ENCODE measurements at regions of chr10 and their contacts with region 1.

Region 1: DNA sequence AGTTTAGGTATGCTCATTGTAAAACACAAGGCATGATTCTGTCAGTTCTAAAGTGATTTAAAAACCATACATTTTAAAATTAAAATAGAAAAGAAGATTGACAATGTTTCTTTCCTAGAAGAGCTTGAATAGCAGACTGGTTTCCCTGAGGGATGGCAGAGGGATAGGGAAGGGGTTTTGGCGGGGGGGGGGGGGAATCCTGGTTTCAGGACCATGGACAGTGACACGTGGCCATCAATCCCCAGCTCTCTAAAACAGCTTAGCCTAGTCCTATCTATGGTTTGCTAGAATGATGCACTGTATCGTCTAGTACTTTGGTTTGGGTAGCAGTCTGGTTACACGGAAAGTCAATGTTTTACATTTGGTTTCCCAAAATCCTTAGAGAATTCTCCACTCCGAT is 88.7 kb downstream of the PHYHIPL start:
- DNase-seq: no peak
- ATAC-seq: no peak
- H3K4me3 Mint-ChIP-seq: no peak overlapping the region
- H3K27ac Mint-ChIP-seq: no peak overlapping the region
- H3K4me1 Mint-ChIP-seq: no peaks in the 10 kb centered on the region
- H3K27me3 Mint-ChIP-seq: no peaks in the 10 kb centered on the region
- CTCF ChIP-seq: no peak

Region 2: DNA sequence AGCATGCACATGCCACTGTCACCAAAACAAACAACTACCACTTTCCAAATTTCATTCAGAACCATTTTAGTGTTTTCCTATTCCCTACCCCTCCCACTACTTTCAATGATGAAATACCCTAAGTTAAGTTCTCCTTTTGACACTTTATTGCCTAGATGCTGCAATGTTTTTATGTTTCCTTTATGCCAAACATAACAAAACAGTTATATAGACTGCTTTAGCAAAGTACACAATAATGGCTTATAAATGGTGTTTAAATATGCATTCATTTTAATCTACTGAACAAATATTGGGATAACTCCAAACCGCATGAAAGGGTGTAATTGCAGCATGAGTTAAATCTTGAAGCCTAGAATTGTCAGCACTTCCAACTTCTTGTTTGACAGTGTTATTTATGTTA is 19.5 kb before region 1 on chr10:
- CTCF ChIA-PET with region 1: no interaction called
- POLR2A ChIA-PET with region 1: no interaction called
- intact Hi-C with region 1: no loop called
- DNase-seq: no peak
- ATAC-seq: no peak
- H3K4me3 Mint-ChIP-seq: no peak overlapping the region
- H3K27ac Mint-ChIP-seq: no peak overlapping the region
- H3K4me1 Mint-ChIP-seq: no peaks in the 10 kb centered on the region
- H3K27me3 Mint-ChIP-seq: peaks cover 2% of the 10 kb centered on the region
- CTCF ChIP-seq: no peak

Region 3: DNA sequence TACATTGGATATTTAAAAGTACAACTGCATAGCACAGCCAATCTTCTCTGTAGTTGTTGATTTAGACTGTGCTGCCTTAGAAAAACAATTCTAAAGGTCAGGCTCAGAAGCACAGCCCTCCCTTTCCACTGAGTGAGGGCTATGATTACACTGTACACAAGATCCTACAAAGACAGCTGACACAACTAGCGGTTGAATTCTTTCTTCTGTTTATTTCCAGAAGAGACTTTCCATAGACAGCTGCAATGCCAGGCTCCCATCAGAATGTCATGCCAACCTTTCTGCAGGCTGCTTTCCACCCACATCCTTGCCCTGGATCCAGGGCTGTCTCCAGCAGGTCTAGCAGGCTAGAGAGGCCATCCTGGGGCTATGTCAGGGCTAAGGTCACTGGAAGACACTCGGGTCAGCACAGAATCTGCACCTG is 57.9 kb after region 1 on chr10:
- CTCF ChIA-PET with region 1: no interaction called
- POLR2A ChIA-PET with region 1: no interaction called
- intact Hi-C with region 1: loop called (anchors 10 kb)
- DNase-seq: no peak
- ATAC-seq: no peak
- H3K4me3 Mint-ChIP-seq: no peak overlapping the region
- H3K27ac Mint-ChIP-seq: no peak overlapping the region
- H3K4me1 Mint-ChIP-seq: no peaks in the 10 kb centered on the region
- H3K27me3 Mint-ChIP-seq: peaks cover 1% of the 10 kb centered on the region
- CTCF ChIP-seq: no peak

Region 4: DNA sequence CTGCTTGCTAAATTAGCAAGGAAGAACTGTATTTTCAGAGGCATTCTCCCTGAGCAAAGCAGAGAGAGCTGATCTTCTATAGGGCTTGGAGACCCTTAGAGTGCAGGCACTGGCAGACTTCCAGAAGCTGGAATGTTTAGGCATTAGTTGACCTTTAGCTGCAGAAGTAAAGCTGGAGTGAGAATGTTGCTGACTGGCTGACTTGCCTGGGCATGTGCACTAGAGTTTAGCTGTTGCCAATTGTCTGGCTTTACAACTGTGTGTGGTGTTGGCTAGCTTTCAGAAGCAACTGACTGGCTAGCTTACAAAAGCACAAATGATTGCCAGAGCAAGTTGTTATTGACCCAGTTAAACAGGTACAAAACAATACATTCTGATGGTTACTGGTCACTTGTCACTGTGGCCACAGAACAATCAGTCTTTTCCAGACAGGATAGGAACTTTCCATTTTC is 72.1 kb after region 1 on chr10:
- CTCF ChIA-PET with region 1: no interaction called
- POLR2A ChIA-PET with region 1: no interaction called
- intact Hi-C with region 1: no loop called
- DNase-seq: no peak
- ATAC-seq: no peak
- H3K4me3 Mint-ChIP-seq: no peak overlapping the region
- H3K27ac Mint-ChIP-seq: no peak overlapping the region
- H3K4me1 Mint-ChIP-seq: no peaks in the 10 kb centered on the region
- H3K27me3 Mint-ChIP-seq: no peaks in the 10 kb centered on the region
- CTCF ChIP-seq: no peak

Region 5: DNA sequence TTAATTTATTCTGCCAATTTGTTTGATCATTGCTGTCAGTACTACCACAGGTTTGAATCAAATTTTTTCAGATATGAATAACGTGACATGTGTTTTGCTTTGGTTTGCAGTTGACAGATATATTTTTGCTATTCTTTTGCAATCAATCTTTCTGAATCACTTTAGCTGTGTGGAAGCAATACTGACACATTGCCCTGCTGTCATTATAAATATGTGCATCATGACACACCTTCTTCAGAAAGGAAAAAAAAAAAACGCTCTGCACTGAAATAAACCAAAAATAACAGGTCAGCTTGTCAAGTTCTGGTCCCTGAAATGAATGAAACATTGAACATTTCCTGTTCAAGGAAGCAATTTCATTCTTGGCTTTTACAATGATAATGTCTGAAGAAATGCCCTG is 191.1 kb after region 1 on chr10:
- CTCF ChIA-PET with region 1: no interaction called
- POLR2A ChIA-PET with region 1: no interaction called
- intact Hi-C with region 1: no loop called
- DNase-seq: no peak
- ATAC-seq: no peak
- H3K4me3 Mint-ChIP-seq: no peak overlapping the region
- H3K27ac Mint-ChIP-seq: no peak overlapping the region
- H3K4me1 Mint-ChIP-seq: no peaks in the 10 kb centered on the region
- H3K27me3 Mint-ChIP-seq: no peaks in the 10 kb centered on the region
- CTCF ChIP-seq: no peak